Activated B cell treated with CpG ODN at 0.5 μM for 24 hours (primary cell): ENCODE measurements at regions of chr19 and their contacts with region 1.

Region 1: DNA sequence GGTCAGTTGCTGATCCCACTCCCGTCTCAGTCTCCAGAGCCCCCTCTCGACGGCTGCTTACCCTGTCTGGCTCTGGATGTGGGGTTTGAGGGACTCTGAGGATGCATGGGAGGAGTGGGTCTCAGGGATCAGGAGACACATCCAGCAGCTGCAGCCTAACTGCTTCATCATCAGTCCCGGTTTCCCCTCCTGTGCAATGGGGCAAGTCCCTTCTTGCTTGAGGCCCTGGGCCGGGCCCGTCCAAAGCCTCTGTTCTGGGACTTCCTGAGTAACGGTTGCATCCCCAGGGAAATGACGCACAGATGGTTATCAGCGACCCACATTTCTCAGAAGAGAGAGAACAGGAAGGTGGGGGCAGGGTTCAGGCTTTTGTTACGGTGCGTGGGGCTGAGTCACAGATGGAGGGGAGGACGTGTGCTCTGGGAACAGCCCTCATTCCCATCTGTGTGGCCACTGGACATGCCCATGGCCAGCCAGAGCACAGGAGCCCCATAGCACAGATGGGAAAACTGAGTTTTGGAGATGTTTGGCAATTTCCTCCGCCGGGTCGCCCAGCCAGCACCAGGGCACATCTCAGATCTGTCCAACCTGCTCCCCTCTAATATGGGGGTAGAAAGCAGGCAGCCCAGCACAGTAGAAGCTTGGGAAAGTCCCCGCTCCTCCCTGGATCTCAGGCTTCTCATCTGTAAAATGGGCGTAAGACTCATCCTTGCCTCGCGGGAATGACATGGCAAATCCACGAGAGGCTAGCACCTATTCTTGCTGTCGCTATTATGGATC is 19.3 kb downstream of the GNA15 start:
- DNase-seq: peak; percentile 62
- ATAC-seq: peak; percentile 97
- H3K4me3 Mint-ChIP-seq: peak overlapping the region; percentile 72
- H3K27ac Mint-ChIP-seq: peak overlapping the region; percentile 84
- H3K4me1 Mint-ChIP-seq: no peaks in the 10 kb centered on the region
- H3K27me3 Mint-ChIP-seq: no peaks in the 10 kb centered on the region
- CTCF ChIP-seq: no peak

Region 2: GRCh38 chr19:3132971-3133792 is 22.0 kb before region 1 on chr19:
- CTCF ChIA-PET with region 1: interaction called, 14 read pairs
- POLR2A ChIA-PET with region 1: no interaction called
- intact Hi-C with region 1: loop called (anchors 1 kb)
- DNase-seq: peak; percentile 41
- ATAC-seq: peak; percentile 87
- H3K4me3 Mint-ChIP-seq: peak overlapping the region; percentile 62
- H3K27ac Mint-ChIP-seq: peak overlapping the region; percentile 46
- H3K4me1 Mint-ChIP-seq: peaks cover 26% of the 10 kb centered on the region
- H3K27me3 Mint-ChIP-seq: peaks cover 5% of the 10 kb centered on the region
- CTCF ChIP-seq: no peak

Region 3: GRCh38 chr19:3198901-3199700 is 44.0 kb after region 1 on chr19:
- CTCF ChIA-PET with region 1: no interaction called
- POLR2A ChIA-PET with region 1: no interaction called
- intact Hi-C with region 1: no loop called
- DNase-seq: no peak
- ATAC-seq: no peak
- H3K4me3 Mint-ChIP-seq: no peak overlapping the region
- H3K27ac Mint-ChIP-seq: no peak overlapping the region
- H3K4me1 Mint-ChIP-seq: no peaks in the 10 kb centered on the region
- H3K27me3 Mint-ChIP-seq: no peaks in the 10 kb centered on the region
- CTCF ChIP-seq: no peak